ENCODE measurements at regions of chr15 and their contacts with region 1.

Region 1: GRCh38 chr15:64739156-64739555 is 36.2 kb downstream of the RBPMS2 start:
- DNase-seq: peak in 1 of 2 donors; percentile 70
- H3K4me3 ChIP-seq: no peak overlapping the region
- H3K27ac ChIP-seq: peak overlapping the region; percentile 37 to 86 (median 74)
- H3K4me1 ChIP-seq: peaks cover 0 to 54% (median 25%) of the 10 kb centered on the region in 4 donors
- H3K27me3 ChIP-seq: no peaks in the 10 kb centered on the region
- CTCF ChIP-seq: no peak
- EP300 ChIP-seq: no peak
- POLR2A ChIP-seq: no peak

Region 2: DNA sequence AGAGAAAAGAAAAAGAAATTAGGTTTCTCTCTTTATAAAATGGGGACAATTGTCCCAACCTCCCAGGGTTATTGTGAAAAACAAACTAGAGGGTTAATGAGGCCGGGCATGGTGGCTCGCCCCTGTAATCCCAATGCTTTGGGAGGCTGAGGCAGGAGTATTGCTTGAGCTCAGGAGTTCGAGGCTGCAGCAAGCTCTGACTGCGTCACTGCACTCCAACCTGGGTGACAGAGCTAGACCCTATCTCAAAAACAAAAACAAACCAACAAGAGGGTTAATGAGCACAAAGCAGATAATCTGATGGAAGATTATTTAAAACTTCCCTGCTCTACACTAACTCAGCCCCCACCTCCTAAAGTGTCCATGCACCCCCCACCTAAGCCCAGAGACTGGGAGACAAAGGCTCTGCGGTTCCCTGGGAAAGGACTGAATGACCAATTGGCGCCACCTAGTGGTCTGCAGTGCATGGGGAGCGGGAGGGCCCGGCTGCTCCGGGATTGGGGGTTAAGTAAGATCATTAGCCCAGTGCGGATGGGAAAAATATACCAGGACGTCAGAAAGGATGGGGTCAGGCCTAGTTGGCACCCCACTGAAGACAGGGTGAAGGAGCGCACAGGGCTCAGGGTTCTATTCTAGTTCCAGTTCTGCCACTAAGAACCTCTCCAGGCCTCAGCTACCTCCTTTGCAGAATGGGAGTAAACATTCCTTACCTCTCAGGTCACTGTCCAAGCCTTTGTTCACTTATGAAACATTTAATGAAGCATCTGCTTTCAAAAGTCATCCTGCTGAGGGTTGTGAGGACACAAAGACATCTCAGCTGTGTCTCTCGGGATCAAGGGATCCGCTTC is 70.7 kb after region 1 on chr15:
- intact Hi-C with region 1: loop called (anchors 5 kb)
- DNase-seq: peak; percentile 84 to 91
- H3K4me3 ChIP-seq: no peak overlapping the region
- H3K27ac ChIP-seq: peak overlapping the region in 2 of 5 donors; percentile 29 to 85
- H3K4me1 ChIP-seq: peaks cover 0 to 17% (median 8%) of the 10 kb centered on the region in 4 donors
- H3K27me3 ChIP-seq: no peaks in the 10 kb centered on the region
- CTCF ChIP-seq: peak in 5 of 7 experiments; percentile 75 to 94 (median 87)
- EP300 ChIP-seq: no peak
- POLR2A ChIP-seq: no peak